ENCODE measurements at regions of chr3 and their contacts with region 1.

Region 1: GRCh38 chr3:102229062-102229655 is 205.7 kb upstream of the ZPLD1 start:
- DNase-seq: peak; percentile 65 to 77 (median 73)
- H3K4me3 ChIP-seq: no peak overlapping the region
- H3K4me3 Mint-ChIP-seq: peak overlapping the region in 1 of 8 donors; percentile 7
- H3K27ac ChIP-seq: no peak overlapping the region
- H3K27ac Mint-ChIP-seq: no peak overlapping the region
- H3K4me1 ChIP-seq: no peaks in the 10 kb centered on the region
- H3K4me1 Mint-ChIP-seq: peaks cover 3 to 12% (median 8%) of the 10 kb centered on the region in 4 donors
- H3K27me3 ChIP-seq: no peaks in the 10 kb centered on the region
- H3K27me3 Mint-ChIP-seq: peaks cover 0 to 2% of the 10 kb centered on the region in 2 donors

Region 2: DNA sequence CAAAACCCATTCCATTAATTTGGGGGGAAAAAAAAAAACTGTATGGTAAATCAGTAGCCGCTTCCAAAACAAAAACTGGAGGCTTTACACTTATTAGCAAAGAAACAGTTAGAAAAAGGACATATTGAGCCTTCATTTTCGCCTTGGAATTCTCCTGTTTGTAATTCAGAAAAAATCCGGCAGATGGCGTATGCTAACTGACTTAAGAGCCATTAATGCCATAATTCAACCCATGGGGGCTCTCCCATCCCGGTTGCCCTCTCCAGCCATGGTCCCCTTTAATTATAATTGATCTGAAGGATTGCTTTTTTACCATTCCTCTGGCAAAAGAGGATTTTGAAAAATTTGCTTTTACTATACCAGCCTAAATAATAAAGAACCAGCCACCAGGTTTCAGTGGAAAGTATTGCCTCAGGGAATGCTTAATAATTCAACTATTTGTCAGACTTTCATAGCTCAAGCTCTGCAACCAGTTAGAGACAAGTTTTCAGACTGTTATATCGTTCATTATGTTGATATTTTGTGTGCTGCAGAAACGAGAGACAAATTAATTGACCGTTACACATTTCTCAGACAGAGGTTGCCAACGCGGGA is 533.3 kb before region 1 on chr3:
- CTCF ChIA-PET with region 1: interaction called, 5 read pairs
- POLR2A ChIA-PET with region 1: no interaction called
- intact Hi-C with region 1: loop called (anchors 1 kb)
- DNase-seq: peak; percentile 51 to 67 (median 58)
- H3K4me3 ChIP-seq: no peak overlapping the region
- H3K4me3 Mint-ChIP-seq: no peak overlapping the region
- H3K27ac ChIP-seq: no peak overlapping the region
- H3K27ac Mint-ChIP-seq: peak overlapping the region in 2 of 7 donors; percentile 74 to 77
- H3K4me1 ChIP-seq: peaks cover 3% of the 10 kb centered on the region
- H3K4me1 Mint-ChIP-seq: peaks cover 0 to 2% (median 1%) of the 10 kb centered on the region in 4 donors
- H3K27me3 ChIP-seq: no peaks in the 10 kb centered on the region
- H3K27me3 Mint-ChIP-seq: no peaks in the 10 kb centered on the region

Region 3: GRCh38 chr3:101809178-101810021 is 419.8 kb before region 1 on chr3:
- CTCF ChIA-PET with region 1: interaction called, 573 read pairs
- POLR2A ChIA-PET with region 1: interaction called, 10 read pairs
- intact Hi-C with region 1: loop called (anchors 1 kb)
- DNase-seq: peak; percentile 49 to 60 (median 55)
- H3K4me3 ChIP-seq: no peak overlapping the region
- H3K4me3 Mint-ChIP-seq: peak overlapping the region in 6 of 8 donors; percentile 22 to 43 (median 34)
- H3K27ac ChIP-seq: peak overlapping the region; percentile 29
- H3K27ac Mint-ChIP-seq: peak overlapping the region; percentile 43 to 90 (median 83)
- H3K4me1 ChIP-seq: peaks cover 28% of the 10 kb centered on the region
- H3K4me1 Mint-ChIP-seq: peaks cover 25 to 47% (median 30%) of the 10 kb centered on the region in 4 donors
- H3K27me3 ChIP-seq: no peaks in the 10 kb centered on the region
- H3K27me3 Mint-ChIP-seq: no peaks in the 10 kb centered on the region

Region 4: DNA sequence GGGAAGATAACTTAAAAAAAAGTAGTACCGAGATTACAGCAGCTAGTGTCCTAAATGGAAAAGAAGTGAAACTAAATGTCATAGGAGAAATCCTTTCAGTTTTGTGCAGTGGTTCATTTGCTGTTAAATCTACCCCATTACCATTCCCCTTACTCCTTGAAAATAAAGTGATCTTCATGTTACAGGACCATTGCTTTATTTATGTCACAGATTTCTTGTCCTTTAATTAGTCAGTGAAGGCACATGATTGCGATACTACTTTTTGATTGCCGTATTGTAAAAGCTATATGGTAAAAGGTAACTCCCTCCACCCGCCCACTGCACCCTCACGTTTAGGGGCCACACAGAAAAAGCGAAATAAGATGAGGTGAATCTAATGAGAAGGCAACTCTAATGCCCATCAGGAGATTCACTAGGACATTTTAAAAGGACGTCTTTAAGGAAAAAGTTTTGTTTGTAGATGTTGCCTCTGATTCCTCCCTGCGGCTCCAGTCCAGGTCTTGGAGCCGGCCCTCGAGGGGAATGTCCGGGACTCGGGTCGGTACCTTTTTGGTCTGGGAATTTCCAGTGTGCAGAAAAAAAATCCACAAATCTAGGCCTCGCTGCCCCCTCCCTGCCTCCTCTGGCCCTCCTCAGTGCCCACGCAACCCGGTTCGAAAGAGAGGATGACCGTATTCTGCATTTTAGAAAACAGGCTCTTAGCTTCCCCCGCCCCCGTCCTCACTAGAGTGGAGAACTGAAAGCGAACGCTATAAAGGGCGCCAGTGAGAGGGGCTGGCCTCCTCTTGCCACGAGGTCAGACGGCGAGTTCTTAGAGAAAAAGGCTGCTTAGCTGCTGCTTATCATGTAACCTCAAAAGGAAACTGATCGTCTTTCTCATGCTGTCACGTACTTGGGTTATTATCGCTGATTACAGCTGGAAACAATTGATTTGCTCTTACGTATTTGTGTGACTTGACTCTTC is 401.7 kb before region 1 on chr3:
- CTCF ChIA-PET with region 1: interaction called, 11 read pairs
- POLR2A ChIA-PET with region 1: interaction called, 3 read pairs
- intact Hi-C with region 1: no loop called
- DNase-seq: peak; percentile 76 to 92 (median 80)
- H3K4me3 ChIP-seq: peak overlapping the region; percentile 63 to 89
- H3K4me3 Mint-ChIP-seq: peak overlapping the region; percentile 89 to 98 (median 94)
- H3K27ac ChIP-seq: peak overlapping the region; percentile 92
- H3K27ac Mint-ChIP-seq: peak overlapping the region; percentile 96 to 100 (median 98)
- H3K4me1 ChIP-seq: peaks cover 40% of the 10 kb centered on the region
- H3K4me1 Mint-ChIP-seq: peaks cover 35 to 59% (median 44%) of the 10 kb centered on the region in 4 donors
- H3K27me3 ChIP-seq: no peaks in the 10 kb centered on the region
- H3K27me3 Mint-ChIP-seq: no peaks in the 10 kb centered on the region

Region 5: DNA sequence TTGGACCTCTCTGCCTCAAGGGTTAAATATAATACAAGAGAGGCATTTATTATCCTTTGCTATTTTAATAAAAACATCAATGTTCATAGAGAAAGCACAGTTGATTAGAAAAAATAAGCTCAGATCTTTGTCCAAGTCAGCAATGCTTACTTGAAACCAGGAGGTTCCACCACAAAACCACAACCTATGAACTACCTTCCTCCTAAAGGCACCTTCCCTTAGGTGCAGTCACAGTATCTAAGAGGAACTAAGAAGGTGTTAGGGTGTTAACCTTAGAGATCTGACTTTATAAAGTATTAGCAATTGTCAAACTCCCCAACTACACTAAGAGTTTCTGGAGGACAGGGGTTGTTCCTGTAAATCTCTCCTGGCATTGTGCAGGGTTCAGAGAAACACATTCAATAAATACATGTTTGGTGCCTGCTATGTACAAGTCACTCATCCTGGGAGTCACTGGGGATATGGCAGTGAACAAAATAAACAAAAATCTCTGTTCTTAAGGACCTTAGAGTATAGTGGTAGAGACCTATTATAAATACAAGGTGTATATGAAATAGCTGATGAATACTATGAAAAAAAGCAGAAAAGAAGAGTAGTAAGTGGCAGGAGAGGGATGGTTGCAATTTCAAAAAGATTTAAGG is 171.3 kb before region 1 on chr3:
- CTCF ChIA-PET with region 1: interaction called, 6 read pairs
- POLR2A ChIA-PET with region 1: interaction called, 3 read pairs
- intact Hi-C with region 1: loop called (anchors 5 kb)
- DNase-seq: peak; percentile 64 to 80 (median 71)
- H3K4me3 ChIP-seq: no peak overlapping the region
- H3K4me3 Mint-ChIP-seq: peak overlapping the region in 7 of 8 donors; percentile 21 to 71 (median 48)
- H3K27ac ChIP-seq: peak overlapping the region; percentile 10
- H3K27ac Mint-ChIP-seq: peak overlapping the region; percentile 15 to 88 (median 44)
- H3K4me1 ChIP-seq: peaks cover 39% of the 10 kb centered on the region
- H3K4me1 Mint-ChIP-seq: peaks cover 28 to 35% (median 31%) of the 10 kb centered on the region in 4 donors
- H3K27me3 ChIP-seq: no peaks in the 10 kb centered on the region
- H3K27me3 Mint-ChIP-seq: no peaks in the 10 kb centered on the region

Region 6: DNA sequence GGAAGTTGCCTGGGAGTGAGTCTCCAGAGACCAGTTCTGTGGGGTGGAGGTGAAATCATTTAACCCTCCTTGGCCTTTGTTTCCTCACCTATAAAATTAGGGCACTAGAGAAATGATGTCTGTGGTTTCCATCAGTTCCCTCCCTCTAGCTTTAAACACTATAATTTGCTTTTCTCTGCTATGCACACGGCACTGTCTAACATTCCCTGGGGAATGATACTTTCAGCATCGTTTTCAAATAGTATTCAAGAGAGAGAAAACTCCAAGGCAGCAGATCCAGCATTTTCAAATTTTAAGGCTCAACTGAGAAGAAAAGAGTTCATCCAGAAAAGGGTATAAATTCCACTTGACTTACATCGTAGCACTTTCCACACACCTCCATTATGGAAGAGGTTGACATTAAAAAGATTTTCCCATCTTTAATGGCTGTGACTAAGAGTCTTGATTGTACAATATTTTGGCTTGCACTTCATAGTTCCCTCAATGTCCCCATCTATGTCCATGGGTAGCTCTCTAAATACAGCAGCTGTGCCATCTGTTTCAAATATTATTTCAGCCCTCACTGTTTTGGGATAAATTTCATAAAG is 68.0 kb after region 1 on chr3:
- CTCF ChIA-PET with region 1: no interaction called
- POLR2A ChIA-PET with region 1: no interaction called
- intact Hi-C with region 1: no loop called
- DNase-seq: no peak
- H3K4me3 ChIP-seq: no peak overlapping the region
- H3K4me3 Mint-ChIP-seq: no peak overlapping the region
- H3K27ac ChIP-seq: no peak overlapping the region
- H3K27ac Mint-ChIP-seq: no peak overlapping the region
- H3K4me1 ChIP-seq: no peaks in the 10 kb centered on the region
- H3K4me1 Mint-ChIP-seq: peaks cover 0 to 1% (median 0%) of the 10 kb centered on the region in 4 donors
- H3K27me3 ChIP-seq: no peaks in the 10 kb centered on the region
- H3K27me3 Mint-ChIP-seq: peaks cover 16 to 23% of the 10 kb centered on the region in 2 donors

Region 7: DNA sequence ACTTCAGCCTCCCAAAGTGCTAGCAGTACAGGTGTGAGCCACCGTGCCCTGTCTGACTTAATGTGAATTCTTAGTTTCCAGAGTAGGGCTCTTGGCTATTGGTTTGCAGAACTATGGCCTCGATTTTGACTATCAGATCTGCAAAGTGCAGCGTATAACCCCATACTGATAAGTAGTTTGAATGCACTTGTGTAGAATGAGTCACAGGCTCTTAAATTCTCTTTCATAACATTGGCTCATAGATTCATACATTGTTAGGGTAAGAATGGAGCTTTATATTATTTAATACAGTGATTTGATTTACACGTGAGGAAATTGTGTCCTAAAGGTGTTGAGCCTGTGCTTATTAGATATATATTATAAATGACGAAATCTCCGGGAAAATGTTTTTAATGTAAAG is 315.6 kb after region 1 on chr3:
- CTCF ChIA-PET with region 1: interaction called, 108 read pairs
- POLR2A ChIA-PET with region 1: no interaction called
- intact Hi-C with region 1: no loop called
- DNase-seq: no peak
- H3K4me3 ChIP-seq: no peak overlapping the region
- H3K4me3 Mint-ChIP-seq: no peak overlapping the region
- H3K27ac ChIP-seq: no peak overlapping the region
- H3K27ac Mint-ChIP-seq: no peak overlapping the region
- H3K4me1 ChIP-seq: no peaks in the 10 kb centered on the region
- H3K4me1 Mint-ChIP-seq: no peaks in the 10 kb centered on the region
- H3K27me3 ChIP-seq: no peaks in the 10 kb centered on the region
- H3K27me3 Mint-ChIP-seq: peaks cover 5 to 9% of the 10 kb centered on the region in 2 donors